MCF 10A (cell line): ENCODE measurements at regions of chr3 and their contacts with region 1.

Region 1: GRCh38 chr3:126659945-126660886 is 5.3 kb upstream of the TXNRD3 start:
- DNase-seq: peak; percentile 32
- H3K4me3 Mint-ChIP-seq: no peak overlapping the region
- H3K27ac Mint-ChIP-seq: no peak overlapping the region
- H3K4me1 Mint-ChIP-seq: no peaks in the 10 kb centered on the region
- H3K27me3 Mint-ChIP-seq: peaks cover 55% of the 10 kb centered on the region
- CTCF ChIP-seq: no peak

Region 2: DNA sequence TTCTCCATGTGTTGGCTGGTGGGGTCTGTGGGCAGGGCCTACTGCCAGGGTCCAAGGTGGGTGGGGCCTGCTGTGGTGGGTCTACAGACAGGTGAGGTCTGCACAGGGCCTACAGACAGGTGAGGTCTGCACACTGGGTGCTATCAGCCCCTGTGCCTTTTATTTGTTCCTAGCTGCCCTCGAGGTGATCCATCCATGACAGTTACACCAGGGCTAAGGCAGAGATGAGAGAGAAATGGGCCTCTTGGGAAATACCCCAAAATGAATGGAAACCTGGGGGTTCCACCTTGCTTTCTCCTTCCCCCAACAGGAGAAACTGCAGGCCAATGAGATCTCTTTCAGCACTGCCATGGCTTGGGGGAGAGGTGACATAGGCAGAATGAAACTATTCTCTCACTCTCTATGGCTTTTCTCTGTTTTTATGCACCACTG is 229.1 kb before region 1 on chr3:
- CTCF ChIA-PET with region 1: no interaction called
- POLR2A ChIA-PET with region 1: no interaction called
- intact Hi-C with region 1: no loop called
- DNase-seq: no peak
- H3K4me3 Mint-ChIP-seq: no peak overlapping the region
- H3K27ac Mint-ChIP-seq: no peak overlapping the region
- H3K4me1 Mint-ChIP-seq: peaks cover 5% of the 10 kb centered on the region
- H3K27me3 Mint-ChIP-seq: no peaks in the 10 kb centered on the region
- CTCF ChIP-seq: no peak

Region 3: DNA sequence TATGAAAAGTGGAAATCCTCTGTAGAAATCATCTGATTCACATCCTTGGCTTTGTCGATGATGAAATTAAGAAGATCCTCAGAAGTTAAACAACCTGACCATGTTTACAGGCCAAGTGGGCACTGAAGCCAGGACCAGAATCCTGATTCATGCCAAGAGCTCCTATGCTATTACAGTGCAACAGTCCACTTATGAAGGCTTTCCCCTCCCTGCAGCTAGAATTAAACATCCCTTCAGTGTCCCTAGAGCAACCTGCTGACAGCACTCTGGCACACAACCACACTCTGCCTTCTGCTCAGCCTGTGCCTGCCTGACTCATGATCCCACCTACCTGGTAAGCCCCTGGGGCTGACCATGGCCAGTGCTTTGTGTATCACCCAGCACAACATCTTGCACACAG is 39.0 kb before region 1 on chr3:
- CTCF ChIA-PET with region 1: no interaction called
- POLR2A ChIA-PET with region 1: no interaction called
- intact Hi-C with region 1: no loop called
- DNase-seq: peak; percentile 67
- H3K4me3 Mint-ChIP-seq: no peak overlapping the region
- H3K27ac Mint-ChIP-seq: no peak overlapping the region
- H3K4me1 Mint-ChIP-seq: peaks cover 42% of the 10 kb centered on the region
- H3K27me3 Mint-ChIP-seq: no peaks in the 10 kb centered on the region
- CTCF ChIP-seq: no peak

Region 4: DNA sequence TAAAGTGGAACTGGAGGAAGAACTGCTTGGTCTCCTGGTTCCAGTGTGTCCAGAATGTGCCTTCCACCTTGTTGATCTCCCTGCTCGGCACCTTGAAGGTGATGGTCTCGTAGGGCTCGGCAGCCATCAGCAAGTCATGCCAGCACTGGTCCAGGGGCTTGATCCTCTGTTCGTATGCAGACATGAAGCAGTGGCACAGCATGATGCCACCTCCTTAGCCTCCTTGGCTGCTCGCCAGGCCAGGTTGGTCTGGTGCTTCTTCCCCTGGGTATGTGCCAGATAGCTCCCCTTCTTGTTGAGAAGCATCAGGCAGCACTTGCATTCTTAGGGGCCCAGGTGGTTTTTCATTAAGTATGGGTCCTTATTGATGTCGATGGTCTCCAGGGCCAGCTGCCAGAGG is 12.5 kb after region 1 on chr3:
- CTCF ChIA-PET with region 1: interaction called, 15 read pairs
- POLR2A ChIA-PET with region 1: no interaction called
- intact Hi-C with region 1: no loop called
- DNase-seq: no peak
- H3K4me3 Mint-ChIP-seq: no peak overlapping the region
- H3K27ac Mint-ChIP-seq: no peak overlapping the region
- H3K4me1 Mint-ChIP-seq: no peaks in the 10 kb centered on the region
- H3K27me3 Mint-ChIP-seq: peaks cover 17% of the 10 kb centered on the region
- CTCF ChIP-seq: no peak

Region 5: DNA sequence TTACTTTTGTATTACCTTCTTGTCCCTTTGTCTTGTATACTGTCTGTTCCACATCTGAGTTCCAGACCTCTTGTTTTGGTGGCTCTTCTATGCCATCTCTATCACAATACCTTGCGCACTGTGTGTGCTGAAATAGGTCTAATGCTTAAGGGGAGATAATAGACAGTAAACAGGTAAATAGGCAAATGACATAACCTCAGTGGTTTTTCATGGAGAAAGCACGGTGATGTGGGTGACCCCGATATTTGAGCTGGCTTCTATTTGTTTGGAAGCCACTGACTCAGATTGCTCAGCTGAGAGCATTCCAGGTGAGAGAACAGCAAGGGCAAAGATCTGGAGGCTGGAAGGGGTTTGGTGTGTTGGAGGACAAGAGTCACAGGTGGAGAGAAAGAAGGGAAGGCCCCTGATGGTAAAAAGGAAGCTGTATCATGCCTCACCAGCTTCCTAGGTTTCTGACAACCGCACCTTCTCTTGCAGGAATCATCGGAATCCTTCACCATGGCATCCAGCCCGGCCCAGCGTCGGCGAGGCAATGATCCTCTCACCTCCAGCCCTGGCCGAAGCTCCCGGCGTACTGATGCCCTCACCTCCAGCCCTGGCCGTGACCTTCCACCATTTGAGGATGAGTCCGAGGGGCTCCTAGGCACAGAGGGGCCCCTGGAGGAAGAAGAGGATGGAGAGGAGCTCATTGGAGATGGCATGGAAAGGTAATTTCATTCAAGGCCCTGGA is 938.8 kb after region 1 on chr3:
- CTCF ChIA-PET with region 1: no interaction called
- POLR2A ChIA-PET with region 1: no interaction called
- intact Hi-C with region 1: no loop called
- DNase-seq: no peak
- H3K4me3 Mint-ChIP-seq: peak overlapping the region; percentile 63
- H3K27ac Mint-ChIP-seq: peak overlapping the region; percentile 7
- H3K4me1 Mint-ChIP-seq: peaks cover 8% of the 10 kb centered on the region
- H3K27me3 Mint-ChIP-seq: no peaks in the 10 kb centered on the region
- CTCF ChIP-seq: no peak